Ovary (tissue), 10 donors: ENCODE measurements at regions of chr6 and their contacts with region 1.

Region 1: GRCh38 chr6:88982720-88983119 is 19.3 kb upstream of the RNGTT start:
- DNase-seq: peak; percentile 44 to 75 (median 49)
- H3K4me3 ChIP-seq: no peak overlapping the region
- H3K27ac ChIP-seq: no peak overlapping the region
- H3K4me1 ChIP-seq: no peaks in the 10 kb centered on the region
- H3K27me3 ChIP-seq: no peaks in the 10 kb centered on the region
- CTCF ChIP-seq: peak; percentile 51 to 84 (median 83)
- EP300 ChIP-seq: no peak
- POLR2A ChIP-seq: no peak

Region 2: GRCh38 chr6:88952065-88952973 is 30.4 kb before region 1 on chr6:
- intact Hi-C with region 1: no loop called
- DNase-seq: no peak
- H3K4me3 ChIP-seq: no peak overlapping the region
- H3K27ac ChIP-seq: no peak overlapping the region
- H3K4me1 ChIP-seq: no peaks in the 10 kb centered on the region
- H3K27me3 ChIP-seq: no peaks in the 10 kb centered on the region
- CTCF ChIP-seq: no peak
- EP300 ChIP-seq: no peak
- POLR2A ChIP-seq: no peak

Region 3: GRCh38 chr6:89080542-89081422 is 98.1 kb after region 1 on chr6 and contains the start of gene PNRC1:
- intact Hi-C with region 1: loop called in 1 of 4 experiments (anchors 10 kb)
- DNase-seq: peak; percentile 100
- H3K4me3 ChIP-seq: peak within 1 kb of the TSS; percentile 64
- H3K27ac ChIP-seq: peak within 1 kb of the TSS; percentile 100
- H3K4me1 ChIP-seq: peaks cover 3% of the 10 kb centered on the region
- H3K27me3 ChIP-seq: no peaks in the 10 kb centered on the region
- CTCF ChIP-seq: peak in 2 of 3 donors; percentile 20 to 26
- EP300 ChIP-seq: peak; percentile 60
- POLR2A ChIP-seq: peak; percentile 100
- total RNA-seq, gene PNRC1: 311 to 507 (median 427) TPM

Region 4: GRCh38 chr6:89242574-89243330 is 260.0 kb after region 1 on chr6:
- intact Hi-C with region 1: loop called (anchors 5 kb)
- DNase-seq: no peak
- H3K4me3 ChIP-seq: no peak overlapping the region
- H3K27ac ChIP-seq: no peak overlapping the region
- H3K4me1 ChIP-seq: no peaks in the 10 kb centered on the region
- H3K27me3 ChIP-seq: no peaks in the 10 kb centered on the region
- CTCF ChIP-seq: peak in 2 of 3 donors; percentile 29 to 48
- EP300 ChIP-seq: no peak
- POLR2A ChIP-seq: no peak

Region 5: DNA sequence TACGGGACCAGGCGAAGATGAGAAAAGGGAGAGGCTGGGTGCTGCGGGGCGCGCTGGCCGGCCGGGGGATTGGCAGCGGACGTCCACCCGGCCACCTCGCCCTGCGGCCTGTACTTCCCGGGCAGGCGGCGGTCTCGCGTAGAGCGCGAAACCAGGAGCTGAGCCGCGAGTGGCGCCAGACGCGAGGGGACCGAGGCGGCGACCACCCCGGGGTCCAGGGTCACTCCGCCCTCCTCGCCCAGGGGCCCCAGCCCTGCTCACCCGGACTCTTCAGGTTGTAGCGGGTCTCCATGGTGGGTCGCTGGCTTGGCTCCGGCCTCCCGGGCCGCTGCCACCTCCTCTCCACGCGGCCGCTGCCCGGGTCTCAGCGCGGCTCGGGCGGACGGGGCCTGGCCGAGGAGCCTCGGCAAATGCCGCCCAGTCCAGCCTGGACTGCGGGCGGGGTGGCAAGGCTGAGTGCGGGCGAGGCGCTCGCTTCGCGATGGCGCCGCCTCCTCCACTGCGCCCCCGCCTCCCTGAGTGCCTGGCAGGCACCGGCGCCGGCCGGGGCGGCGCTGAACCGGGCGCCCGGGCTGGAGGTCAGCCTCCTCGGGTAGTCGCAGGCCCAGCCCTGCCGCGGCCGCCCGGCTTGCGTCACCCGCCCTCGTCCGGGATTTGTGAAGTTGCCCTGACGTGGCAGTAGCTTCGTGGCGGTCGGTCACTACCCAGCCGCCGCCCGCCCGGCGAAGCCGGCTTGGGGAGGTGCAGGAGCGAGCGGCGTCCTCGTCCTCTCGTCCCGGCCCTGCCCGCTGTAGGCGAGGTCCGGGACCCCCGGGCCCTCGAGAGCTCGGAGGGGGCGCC is 369.8 kb after region 1 on chr6 and contains the start of gene UBE2J1:
- intact Hi-C with region 1: loop called in 1 of 4 experiments (anchors 10 kb)
- DNase-seq: peak; percentile 86 to 93 (median 91)
- H3K4me3 ChIP-seq: peak within 1 kb of the TSS; percentile 70
- H3K27ac ChIP-seq: peak within 1 kb of the TSS; percentile 93 to 99
- H3K4me1 ChIP-seq: peaks cover 11% of the 10 kb centered on the region
- H3K27me3 ChIP-seq: no peaks in the 10 kb centered on the region
- CTCF ChIP-seq: peak in 1 of 3 donors; percentile 18
- EP300 ChIP-seq: peak; percentile 14
- POLR2A ChIP-seq: peak; percentile 80
- total RNA-seq, gene UBE2J1: 25.3 to 48.6 (median 35.8) TPM

Region 6: GRCh38 chr6:89371849-89372505 is 389.3 kb after region 1 on chr6:
- intact Hi-C with region 1: loop called in 1 of 4 experiments (anchors 5 kb)
- DNase-seq: peak; percentile 42 to 69 (median 54)
- H3K4me3 ChIP-seq: no peak overlapping the region
- H3K27ac ChIP-seq: no peak overlapping the region
- H3K4me1 ChIP-seq: peaks cover 1% of the 10 kb centered on the region
- H3K27me3 ChIP-seq: no peaks in the 10 kb centered on the region
- CTCF ChIP-seq: peak; percentile 25 to 54 (median 44)
- EP300 ChIP-seq: no peak
- POLR2A ChIP-seq: no peak